PC-3 (cell line): ENCODE measurements at regions of chr13 and their contacts with region 1.

Region 1: DNA sequence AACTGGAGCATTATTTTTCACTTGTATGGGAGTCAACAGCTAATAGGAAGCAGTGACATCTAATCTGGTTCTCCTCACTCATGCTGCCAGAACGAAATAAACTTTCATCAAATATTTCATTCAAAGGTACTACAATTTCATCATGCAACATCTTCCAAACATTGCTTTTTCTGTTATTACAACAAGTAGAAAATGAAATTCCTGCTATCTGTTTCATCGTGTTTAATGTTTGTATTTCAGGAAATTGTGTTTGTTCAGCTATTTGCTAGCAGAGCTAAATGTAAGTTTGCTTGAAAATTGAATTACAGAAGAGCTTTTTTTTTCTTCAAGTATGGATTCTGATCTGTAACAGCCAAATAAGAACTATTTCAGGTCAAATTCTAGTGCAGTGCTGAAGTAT is 90.1 kb downstream of the SLITRK6 start:
- DNase-seq: peak; percentile 21
- ATAC-seq: peak; percentile 61; the same call in 1 of the 2 replicates
- H3K4me3 ChIP-seq: peak overlapping the region; percentile 9; the same call in 1 of the 2 replicates
- H3K27ac ChIP-seq: peak overlapping the region; percentile 41; the same call in 1 of the 2 replicates
- H3K4me1 ChIP-seq: peaks cover 14% of the 10 kb centered on the region
- H3K27me3 ChIP-seq: no peaks in the 10 kb centered on the region
- CTCF ChIP-seq: no peak

Region 2: DNA sequence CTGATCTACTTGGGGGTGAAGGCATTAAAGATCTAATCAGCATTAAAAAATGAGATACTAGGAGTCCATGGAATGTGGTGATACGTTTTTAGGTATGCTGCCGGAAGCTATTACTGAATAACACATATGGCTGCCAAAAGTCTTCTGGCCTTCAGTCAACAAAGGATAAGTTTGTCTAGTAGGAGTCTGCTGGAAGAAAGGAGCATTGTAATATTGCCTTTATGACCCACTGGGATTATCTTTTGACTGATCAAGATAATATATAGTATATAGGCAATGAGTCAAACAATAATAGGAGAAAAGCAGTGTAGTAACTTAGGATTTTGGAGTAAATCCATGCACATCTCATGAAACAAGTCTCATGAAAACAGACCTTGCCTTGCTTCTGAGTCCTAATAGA is 205.3 kb before region 1 on chr13:
- CTCF ChIA-PET with region 1: no interaction called
- POLR2A ChIA-PET with region 1: no interaction called
- intact Hi-C with region 1: loop called (anchors 5 kb)
- DNase-seq: peak; percentile 92
- ATAC-seq: peak; percentile 82
- H3K4me3 ChIP-seq: no peak overlapping the region
- H3K27ac ChIP-seq: peak overlapping the region; percentile 74
- H3K4me1 ChIP-seq: peaks cover 55% of the 10 kb centered on the region
- H3K27me3 ChIP-seq: no peaks in the 10 kb centered on the region
- CTCF ChIP-seq: no peak

Region 3: GRCh38 chr13:85799097-85799582 is 90.1 kb after region 1 on chr13 and contains the start of gene SLITRK6:
- CTCF ChIA-PET with region 1: no interaction called
- POLR2A ChIA-PET with region 1: no interaction called
- intact Hi-C with region 1: loop called (anchors 1 kb)
- DNase-seq: peak; percentile 93
- ATAC-seq: peak; percentile 100
- H3K4me3 ChIP-seq: peak within 1 kb of the TSS; percentile 71
- H3K27ac ChIP-seq: peak within 1 kb of the TSS; percentile 46
- H3K4me1 ChIP-seq: peaks cover 15% of the 10 kb centered on the region
- H3K27me3 ChIP-seq: no peaks in the 10 kb centered on the region
- CTCF ChIP-seq: peak; percentile 50
- total RNA-seq, gene SLITRK6: 4.1 and 4.6 TPM in 2 replicates